H1 (cell line): ENCODE measurements at regions of chr12 and their contacts with region 1.

Region 1: GRCh38 chr12:52416383-52416750 is 10.2 kb upstream of the KRT82 start:
- DNase-seq: no peak
- H3K4me3 ChIP-seq: no peak overlapping the region
- H3K27ac ChIP-seq: no peak overlapping the region
- H3K4me1 ChIP-seq: no peaks in the 10 kb centered on the region
- H3K27me3 ChIP-seq: no peaks in the 10 kb centered on the region
- CTCF ChIP-seq: no peak
- EP300 ChIP-seq: no peak
- POLR2A ChIP-seq: no peak
- RAD21 ChIP-seq: no peak

Region 2: GRCh38 chr12:52404956-52405355 is 11.4 kb before region 1 on chr12:
- CTCF ChIA-PET with region 1: interaction called, 12 read pairs
- POLR2A ChIA-PET with region 1: no interaction called
- DNase-seq: no peak
- H3K4me3 ChIP-seq: no peak overlapping the region
- H3K27ac ChIP-seq: no peak overlapping the region
- H3K4me1 ChIP-seq: peaks cover 0 to 5% (median under 1%) of the 10 kb centered on the region in 4 experiments; a peak in 1 of 7 replicates
- H3K27me3 ChIP-seq: no peaks in the 10 kb centered on the region; a peak in 1 of 7 replicates
- CTCF ChIP-seq: no peak; a peak in 1 of 4 replicates
- EP300 ChIP-seq: no peak
- POLR2A ChIP-seq: no peak
- RAD21 ChIP-seq: no peak

Region 3: GRCh38 chr12:52452101-52452500 is 35.7 kb after region 1 on chr12 and contains the start of gene KRT6B:
- CTCF ChIA-PET with region 1: no interaction called
- POLR2A ChIA-PET with region 1: no interaction called
- DNase-seq: no peak
- H3K4me3 ChIP-seq: no peak within 1 kb of the TSS
- H3K27ac ChIP-seq: no peak within 1 kb of the TSS
- H3K4me1 ChIP-seq: no peaks in the 10 kb centered on the region
- H3K27me3 ChIP-seq: no peaks in the 10 kb centered on the region
- CTCF ChIP-seq: no peak
- EP300 ChIP-seq: no peak
- POLR2A ChIP-seq: no peak
- RAD21 ChIP-seq: no peak
- total RNA-seq, gene KRT6B: not detected in 2 replicates

Region 4: DNA sequence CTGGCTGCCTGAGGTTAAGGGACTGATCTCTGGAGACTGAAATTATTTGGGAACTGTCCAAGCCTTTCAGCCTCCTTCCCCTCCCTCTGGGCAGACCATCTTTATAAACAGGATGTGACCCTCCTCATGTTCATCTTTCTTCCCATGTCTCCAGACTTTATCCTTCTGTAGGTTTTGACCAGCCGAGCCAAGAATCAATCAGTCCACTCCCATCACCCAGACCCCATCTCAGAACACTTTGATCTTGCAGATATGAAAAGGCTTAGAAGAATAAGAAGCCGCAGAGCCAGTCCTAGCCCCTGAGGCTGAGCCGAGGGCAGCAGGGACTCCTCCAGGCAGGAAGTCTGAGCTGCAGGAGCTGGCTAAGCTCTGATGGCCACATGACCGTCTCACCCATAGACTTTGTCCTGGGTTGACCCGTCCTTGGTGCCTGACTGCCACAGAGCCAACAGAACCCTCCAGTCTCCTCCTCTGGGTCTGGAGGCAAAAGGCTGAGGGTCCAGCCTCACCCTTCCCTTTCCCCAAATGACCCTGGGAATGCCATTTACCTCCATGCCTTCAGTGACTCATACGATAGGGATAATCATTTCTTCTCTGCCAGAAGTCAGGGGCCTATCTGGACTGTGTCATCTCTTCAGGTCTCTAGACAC is 135.0 kb after region 1 on chr12:
- CTCF ChIA-PET with region 1: interaction called, 11 read pairs
- POLR2A ChIA-PET with region 1: no interaction called
- DNase-seq: no peak
- H3K4me3 ChIP-seq: no peak overlapping the region
- H3K27ac ChIP-seq: no peak overlapping the region
- H3K4me1 ChIP-seq: no peaks in the 10 kb centered on the region
- H3K27me3 ChIP-seq: no peaks in the 10 kb centered on the region
- CTCF ChIP-seq: no peak
- EP300 ChIP-seq: no peak
- POLR2A ChIP-seq: no peak
- RAD21 ChIP-seq: no peak